ENCODE measurements at regions of chr7 and their contacts with region 1.

Region 1: GRCh38 chr7:1432411-1433082 is 26.7 kb downstream of the MICALL2 start:
- DNase-seq: peak; percentile 94
- H3K4me3 ChIP-seq: no peak overlapping the region; a peak in 1 of 4 replicates
- H3K27ac ChIP-seq: no peak overlapping the region
- H3K4me1 ChIP-seq: no peaks in the 10 kb centered on the region
- H3K27me3 ChIP-seq: 0 out of 2 replicates have a peak, but pooled peaks cover 7% of the 10 kb centered on the region
- CTCF ChIP-seq: peak; percentile 99
- EP300 ChIP-seq: no peak
- RAD21 ChIP-seq: peak; percentile 81

Region 2: GRCh38 chr7:1204460-1205140 is 227.9 kb before region 1 on chr7:
- CTCF ChIA-PET with region 1: interaction called, 12 read pairs
- POLR2A ChIA-PET with region 1: no interaction called
- DNase-seq: no peak
- H3K4me3 ChIP-seq: no peak overlapping the region
- H3K27ac ChIP-seq: no peak overlapping the region
- H3K4me1 ChIP-seq: no peaks in the 10 kb centered on the region
- H3K27me3 ChIP-seq: peaks cover 99% of the 10 kb centered on the region
- CTCF ChIP-seq: no peak
- EP300 ChIP-seq: no peak
- RAD21 ChIP-seq: no peak

Region 3: GRCh38 chr7:1234881-1235500 is 197.6 kb before region 1 on chr7:
- CTCF ChIA-PET with region 1: interaction called, 14 read pairs
- POLR2A ChIA-PET with region 1: no interaction called
- DNase-seq: no peak
- H3K4me3 ChIP-seq: no peak overlapping the region
- H3K27ac ChIP-seq: no peak overlapping the region
- H3K4me1 ChIP-seq: no peaks in the 10 kb centered on the region
- H3K27me3 ChIP-seq: peaks cover 84% of the 10 kb centered on the region
- CTCF ChIP-seq: no peak
- EP300 ChIP-seq: no peak
- RAD21 ChIP-seq: no peak

Region 4: GRCh38 chr7:1297017-1297960 is 135.3 kb before region 1 on chr7:
- CTCF ChIA-PET with region 1: interaction called, 13 read pairs
- POLR2A ChIA-PET with region 1: no interaction called
- DNase-seq: peak; percentile 46
- H3K4me3 ChIP-seq: no peak overlapping the region
- H3K27ac ChIP-seq: no peak overlapping the region
- H3K4me1 ChIP-seq: no peaks in the 10 kb centered on the region
- H3K27me3 ChIP-seq: peaks cover 89% of the 10 kb centered on the region
- CTCF ChIP-seq: no peak
- EP300 ChIP-seq: no peak
- RAD21 ChIP-seq: no peak

Region 5: GRCh38 chr7:1418505-1419309 is 13.8 kb before region 1 on chr7:
- CTCF ChIA-PET with region 1: interaction called, 62 read pairs
- POLR2A ChIA-PET with region 1: no interaction called
- DNase-seq: peak; percentile 78
- H3K4me3 ChIP-seq: no peak overlapping the region
- H3K27ac ChIP-seq: no peak overlapping the region
- H3K4me1 ChIP-seq: peaks cover 0 to 4% of the 10 kb centered on the region in 2 experiments; a peak in 2 of 4 replicates
- H3K27me3 ChIP-seq: peaks cover 75% of the 10 kb centered on the region
- CTCF ChIP-seq: no peak
- EP300 ChIP-seq: no peak
- RAD21 ChIP-seq: no peak

Region 6: GRCh38 chr7:1473864-1474512 is 41.4 kb after region 1 on chr7:
- CTCF ChIA-PET with region 1: interaction called, 50 read pairs
- POLR2A ChIA-PET with region 1: no interaction called
- DNase-seq: peak; percentile 97
- H3K4me3 ChIP-seq: no peak overlapping the region; a peak in 1 of 4 replicates
- H3K27ac ChIP-seq: no peak overlapping the region; a peak in 1 of 4 replicates
- H3K4me1 ChIP-seq: no peaks in the 10 kb centered on the region; a peak in 1 of 4 replicates
- H3K27me3 ChIP-seq: no peaks in the 10 kb centered on the region
- CTCF ChIP-seq: peak; percentile 93
- EP300 ChIP-seq: no peak
- RAD21 ChIP-seq: peak; percentile 80

Measured in SK-N-SH (cell line).